CD8-positive, alpha-beta T cell (primary cell): ENCODE measurements at regions of chr7 and their contacts with region 1.

Region 1: GRCh38 chr7:106176414-106177299 is 64.5 kb upstream of the SYPL1 start:
- DNase-seq: peak; percentile 46 to 81 (median 69)
- ATAC-seq: peak; percentile 79
- H3K4me3 ChIP-seq: no peak overlapping the region
- H3K4me3 Mint-ChIP-seq: no peak overlapping the region
- H3K27ac ChIP-seq: no peak overlapping the region
- H3K27ac Mint-ChIP-seq: no peak overlapping the region
- H3K4me1 ChIP-seq: no peaks in the 10 kb centered on the region
- H3K4me1 Mint-ChIP-seq: peaks cover 2% of the 10 kb centered on the region
- H3K27me3 ChIP-seq: peaks cover 2 to 4% of the 10 kb centered on the region in 2 experiments
- H3K27me3 Mint-ChIP-seq: peaks cover 10% of the 10 kb centered on the region
- CTCF ChIP-seq: peak; percentile 85

Region 2: DNA sequence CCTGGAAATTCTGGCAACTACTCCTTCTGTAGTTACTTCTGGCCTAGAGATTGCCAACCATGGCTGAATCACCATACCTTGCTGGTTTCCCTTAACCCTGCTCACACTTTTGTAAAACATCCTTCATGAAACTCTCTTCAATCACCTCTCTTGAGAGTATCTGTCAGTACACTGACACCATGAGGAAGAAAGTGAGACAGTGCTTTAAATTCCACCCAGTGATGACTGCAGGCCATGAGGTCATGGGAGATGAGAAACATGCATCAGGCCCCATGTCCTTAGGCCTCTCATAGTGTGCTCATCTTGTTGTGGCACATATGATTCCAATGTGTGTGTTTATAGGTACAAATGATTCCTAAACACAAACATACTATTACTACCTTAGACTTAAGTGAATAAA is 132.7 kb after region 1 on chr7:
- CTCF ChIA-PET with region 1: interaction called, 7 read pairs
- POLR2A ChIA-PET with region 1: no interaction called
- intact Hi-C with region 1: loop called in 1 of 2 experiments (anchors 2 kb)
- DNase-seq: peak in 2 of 9 experiments; percentile 4 to 11
- ATAC-seq: no peak
- H3K4me3 ChIP-seq: no peak overlapping the region
- H3K4me3 Mint-ChIP-seq: no peak overlapping the region
- H3K27ac ChIP-seq: no peak overlapping the region
- H3K27ac Mint-ChIP-seq: no peak overlapping the region
- H3K4me1 ChIP-seq: no peaks in the 10 kb centered on the region
- H3K4me1 Mint-ChIP-seq: no peaks in the 10 kb centered on the region
- H3K27me3 ChIP-seq: no peaks in the 10 kb centered on the region
- H3K27me3 Mint-ChIP-seq: peaks cover 11% of the 10 kb centered on the region
- CTCF ChIP-seq: no peak

Region 3: GRCh38 chr7:106367018-106367420 is 190.4 kb after region 1 on chr7:
- CTCF ChIA-PET with region 1: no interaction called
- POLR2A ChIA-PET with region 1: no interaction called
- intact Hi-C with region 1: loop called (anchors 1 kb)
- DNase-seq: peak in 2 of 9 experiments; percentile 18 to 33
- ATAC-seq: no peak
- H3K4me3 ChIP-seq: no peak overlapping the region
- H3K4me3 Mint-ChIP-seq: no peak overlapping the region
- H3K27ac ChIP-seq: no peak overlapping the region
- H3K27ac Mint-ChIP-seq: no peak overlapping the region
- H3K4me1 ChIP-seq: no peaks in the 10 kb centered on the region
- H3K4me1 Mint-ChIP-seq: no peaks in the 10 kb centered on the region
- H3K27me3 ChIP-seq: no peaks in the 10 kb centered on the region
- H3K27me3 Mint-ChIP-seq: no peaks in the 10 kb centered on the region
- CTCF ChIP-seq: no peak

Region 4: DNA sequence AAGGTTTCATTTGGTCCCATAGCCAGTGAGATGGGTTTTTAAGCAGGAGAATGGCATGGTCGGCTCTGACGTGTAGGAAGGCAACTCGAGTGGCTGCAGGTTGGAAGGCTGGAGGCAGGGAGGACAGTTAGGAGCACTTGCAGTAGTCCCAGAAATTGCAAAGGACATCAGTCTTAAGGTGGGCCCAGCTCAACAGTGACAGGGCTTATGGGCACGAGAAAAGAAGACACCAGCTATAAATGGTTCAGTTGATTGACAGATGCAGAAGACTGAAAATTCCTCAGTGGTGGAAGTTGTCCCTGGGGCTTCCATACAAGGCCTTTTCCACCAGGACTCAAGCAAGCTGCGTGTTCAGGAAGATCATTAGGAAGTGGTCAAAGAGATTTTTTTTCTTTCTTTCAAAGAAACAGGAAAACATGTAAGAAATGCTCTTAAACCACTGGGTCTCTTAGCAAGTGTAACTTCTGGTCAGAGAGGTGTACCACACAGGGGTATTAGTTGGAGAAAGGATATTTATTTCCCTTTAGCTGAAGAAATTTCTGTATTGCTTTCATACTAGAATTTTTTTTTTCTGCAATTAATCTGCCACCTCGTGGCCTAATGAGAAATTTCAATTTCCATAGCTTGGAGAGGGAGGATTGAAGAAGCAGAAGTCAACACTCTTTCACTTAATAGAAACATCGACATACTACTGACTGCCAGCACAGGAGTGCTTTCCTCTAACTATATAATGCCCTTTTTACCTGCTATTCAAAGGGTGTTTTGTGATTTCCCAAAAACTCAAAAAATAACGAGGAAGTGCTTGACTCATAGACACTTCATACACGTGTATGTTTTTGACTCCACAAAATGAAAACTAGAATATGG is 285.6 kb after region 1 on chr7:
- CTCF ChIA-PET with region 1: interaction called, 194 read pairs
- POLR2A ChIA-PET with region 1: interaction called, 3 read pairs
- intact Hi-C with region 1: loop called in 1 of 2 experiments (anchors 1 kb)
- DNase-seq: peak in 2 of 9 experiments; percentile 31 to 41
- ATAC-seq: no peak
- H3K4me3 ChIP-seq: no peak overlapping the region
- H3K4me3 Mint-ChIP-seq: no peak overlapping the region
- H3K27ac ChIP-seq: no peak overlapping the region
- H3K27ac Mint-ChIP-seq: no peak overlapping the region
- H3K4me1 ChIP-seq: no peaks in the 10 kb centered on the region
- H3K4me1 Mint-ChIP-seq: no peaks in the 10 kb centered on the region
- H3K27me3 ChIP-seq: no peaks in the 10 kb centered on the region
- H3K27me3 Mint-ChIP-seq: no peaks in the 10 kb centered on the region
- CTCF ChIP-seq: peak; percentile 57

Region 5: DNA sequence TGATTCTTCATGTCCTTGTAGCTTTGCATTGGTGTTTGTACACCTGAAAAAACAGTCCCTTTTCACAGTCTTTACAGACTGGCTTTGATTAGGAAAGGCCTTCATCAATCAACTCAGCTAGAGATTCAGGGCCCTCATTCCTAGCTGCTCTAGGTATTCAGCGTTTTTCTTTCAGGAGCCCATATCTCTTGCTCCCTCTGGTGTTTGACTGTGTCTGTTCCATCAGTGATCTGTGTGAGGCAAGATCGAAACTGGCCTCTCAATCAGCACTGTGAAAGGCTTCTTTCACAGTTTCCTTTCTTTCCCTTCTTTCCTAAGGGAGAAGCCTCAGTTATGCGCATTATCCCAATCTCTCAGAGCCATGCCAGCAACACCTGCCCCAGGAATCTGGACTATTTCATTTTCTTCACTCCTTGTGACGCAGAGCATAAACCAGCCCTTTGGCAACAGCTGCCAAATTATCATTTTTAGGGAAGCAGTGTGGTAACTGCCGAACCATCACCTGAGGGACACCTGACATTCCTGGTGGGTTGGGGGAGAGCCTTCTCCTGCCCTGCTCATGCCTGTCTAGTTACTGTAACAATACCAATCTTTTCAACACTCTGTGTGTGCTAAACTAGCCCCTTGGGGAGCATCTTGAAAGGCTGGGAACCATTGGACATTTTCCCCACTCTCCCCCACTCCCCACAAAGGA is 560.0 kb after region 1 on chr7:
- CTCF ChIA-PET with region 1: interaction called, 28 read pairs
- POLR2A ChIA-PET with region 1: no interaction called
- intact Hi-C with region 1: loop called in 1 of 2 experiments (anchors 1 kb)
- DNase-seq: peak in 7 of 9 experiments; percentile 11 to 75 (median 22)
- ATAC-seq: peak; percentile 77
- H3K4me3 ChIP-seq: no peak overlapping the region
- H3K4me3 Mint-ChIP-seq: no peak overlapping the region
- H3K27ac ChIP-seq: no peak overlapping the region
- H3K27ac Mint-ChIP-seq: no peak overlapping the region
- H3K4me1 ChIP-seq: peaks cover 6% of the 10 kb centered on the region
- H3K4me1 Mint-ChIP-seq: peaks cover 14% of the 10 kb centered on the region
- H3K27me3 ChIP-seq: no peaks in the 10 kb centered on the region
- H3K27me3 Mint-ChIP-seq: no peaks in the 10 kb centered on the region
- CTCF ChIP-seq: peak; percentile 54

Region 6: DNA sequence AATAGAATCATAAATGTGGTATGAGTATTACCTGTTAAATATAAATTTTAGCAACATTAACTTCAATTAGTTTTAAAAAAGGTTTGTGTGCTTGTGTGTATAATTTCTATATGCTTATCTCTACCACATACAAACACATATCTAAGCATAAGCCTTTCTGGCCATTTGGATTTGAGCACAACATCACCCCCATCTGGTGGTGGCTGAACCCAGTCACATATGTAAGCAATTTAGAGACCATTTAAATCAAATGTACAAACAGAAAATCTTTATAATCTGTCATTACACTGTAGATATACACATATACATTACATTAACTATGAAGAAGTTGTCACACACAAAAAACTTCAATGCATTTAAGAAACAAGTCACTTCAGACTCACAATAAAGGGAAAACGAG is 1324.9 kb after region 1 on chr7:
- CTCF ChIA-PET with region 1: no interaction called
- POLR2A ChIA-PET with region 1: no interaction called
- intact Hi-C with region 1: loop called in 1 of 2 experiments (anchors 5 kb)
- DNase-seq: peak in 4 of 9 experiments; percentile 16 to 47 (median 30)
- ATAC-seq: no peak
- H3K4me3 ChIP-seq: no peak overlapping the region
- H3K4me3 Mint-ChIP-seq: no peak overlapping the region
- H3K27ac ChIP-seq: no peak overlapping the region
- H3K27ac Mint-ChIP-seq: no peak overlapping the region
- H3K4me1 ChIP-seq: no peaks in the 10 kb centered on the region
- H3K4me1 Mint-ChIP-seq: peaks cover 19% of the 10 kb centered on the region
- H3K27me3 ChIP-seq: no peaks in the 10 kb centered on the region
- H3K27me3 Mint-ChIP-seq: no peaks in the 10 kb centered on the region
- CTCF ChIP-seq: no peak